ENCODE measurements at regions of chr2 and their contacts with region 1.

Region 1: GRCh38 chr2:70104231-70105111 is 17.2 kb downstream of the PCBP1 start:
- DNase-seq: peak; percentile 69
- ATAC-seq: no peak
- H3K4me3 ChIP-seq: peak overlapping the region in 2 of 3 experiments; percentile 45 to 59; a peak in 4 of 6 replicates
- H3K27ac ChIP-seq: peak overlapping the region; percentile 55
- H3K4me1 ChIP-seq: peaks cover 54% of the 10 kb centered on the region
- H3K27me3 ChIP-seq: no peaks in the 10 kb centered on the region; a peak in 1 of 5 replicates
- CTCF ChIP-seq: no peak
- EP300 ChIP-seq: peak in 1 of 2 experiments; percentile 32; a peak in 1 of 4 replicates
- POLR2A ChIP-seq: no peak
- RAD21 ChIP-seq: no peak

Region 2: DNA sequence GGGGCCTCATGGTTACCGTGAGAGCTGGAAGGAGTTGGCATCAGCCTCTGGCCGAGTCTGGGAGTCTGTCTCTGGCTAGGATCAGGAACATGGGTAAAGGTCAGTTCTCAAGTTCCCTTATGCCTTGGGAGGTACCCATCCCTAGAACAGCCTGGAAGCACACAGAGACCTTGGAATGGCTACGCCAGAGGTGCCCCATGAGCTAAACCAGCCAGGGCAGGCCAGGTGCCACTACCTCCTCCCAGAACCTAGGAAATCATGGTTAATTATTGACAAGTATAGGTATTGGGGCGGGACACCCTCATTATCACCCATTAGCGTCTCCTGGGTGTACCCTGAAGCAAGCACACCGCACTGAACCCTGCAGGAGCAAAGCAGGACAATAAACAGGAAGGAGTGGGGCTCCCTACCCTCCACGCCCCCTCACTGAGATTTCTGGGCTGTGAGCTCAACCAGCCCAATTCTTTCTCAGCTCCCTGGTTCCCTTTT is 140.1 kb before region 1 on chr2:
- CTCF ChIA-PET with region 1: no interaction called
- POLR2A ChIA-PET with region 1: no interaction called
- in situ Hi-C with region 1: no loop called
- intact Hi-C with region 1: no loop called
- DNase-seq: peak; percentile 58
- ATAC-seq: peak; percentile 57
- H3K4me3 ChIP-seq: peak overlapping the region in 2 of 3 experiments; percentile 13 to 37; a peak in 3 of 6 replicates
- H3K27ac ChIP-seq: no peak overlapping the region
- H3K4me1 ChIP-seq: peaks cover 52% of the 10 kb centered on the region
- H3K27me3 ChIP-seq: no peaks in the 10 kb centered on the region
- CTCF ChIP-seq: 0 out of 2 replicates have a peak, but pooled peaks have one; percentile 9
- EP300 ChIP-seq: no peak
- POLR2A ChIP-seq: no peak
- RAD21 ChIP-seq: no peak

Region 3: DNA sequence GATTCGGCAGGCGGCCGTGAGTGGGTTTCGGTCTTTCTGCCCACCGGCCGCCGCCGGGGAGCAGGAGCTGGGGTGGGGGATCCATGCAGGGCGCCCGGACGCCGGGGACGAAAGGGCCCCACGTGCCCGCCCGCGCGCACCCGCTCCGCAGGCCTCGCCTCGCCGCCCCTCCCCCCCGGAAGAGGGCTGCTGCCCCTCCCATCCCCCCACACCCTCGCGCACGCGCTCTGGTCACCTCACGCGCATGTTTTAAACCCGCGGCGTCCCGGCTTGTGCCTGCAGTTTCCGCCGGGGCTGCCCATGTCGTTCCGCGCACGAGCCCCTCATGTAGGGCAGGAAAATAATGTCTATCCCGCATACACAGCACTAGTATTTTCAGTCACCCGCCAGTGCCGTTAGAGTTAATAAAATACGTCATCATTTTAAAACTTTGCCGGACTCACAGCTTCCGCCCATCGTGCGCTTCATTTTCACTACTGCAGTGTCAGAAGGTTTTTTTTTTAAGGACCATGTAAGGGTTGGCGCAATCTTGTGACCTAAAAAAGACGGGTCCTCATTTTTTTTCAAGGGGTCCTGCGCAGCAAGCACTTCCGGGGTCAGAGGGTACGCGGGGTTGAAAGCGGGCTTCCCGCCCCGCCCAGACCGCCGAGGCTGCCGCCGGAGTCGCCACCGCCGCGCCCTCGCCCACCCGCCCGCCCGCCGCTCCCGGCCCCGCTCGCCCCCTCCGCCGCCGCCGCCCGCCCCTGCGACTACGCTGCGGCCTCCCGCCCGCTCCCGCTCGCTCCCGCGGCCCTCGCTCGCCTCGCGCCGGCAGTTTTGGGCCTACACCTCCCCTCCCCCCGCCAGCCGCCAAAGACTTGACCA is 17.4 kb before region 1 on chr2 and contains the start of gene PCBP1:
- CTCF ChIA-PET with region 1: no interaction called
- POLR2A ChIA-PET with region 1: interaction called, 423 read pairs
- in situ Hi-C with region 1: no loop called
- intact Hi-C with region 1: loop called (anchors 2 kb)
- DNase-seq: peak; percentile 94
- ATAC-seq: peak; percentile 49
- H3K4me3 ChIP-seq: peak within 1 kb of the TSS; percentile 93 to 95 (median 95)
- H3K27ac ChIP-seq: peak within 1 kb of the TSS; percentile 99
- H3K4me1 ChIP-seq: peaks cover 56% of the 10 kb centered on the region
- H3K27me3 ChIP-seq: no peaks in the 10 kb centered on the region; a peak in 1 of 5 replicates
- CTCF ChIP-seq: no peak
- EP300 ChIP-seq: no peak; a peak in 2 of 4 replicates
- POLR2A ChIP-seq: peak; percentile 71 to 81
- RAD21 ChIP-seq: peak; percentile 50; the same call in 1 of the 2 replicates
- total RNA-seq, gene PCBP1: 32.0 and 104 TPM in 2 replicates

Region 4: DNA sequence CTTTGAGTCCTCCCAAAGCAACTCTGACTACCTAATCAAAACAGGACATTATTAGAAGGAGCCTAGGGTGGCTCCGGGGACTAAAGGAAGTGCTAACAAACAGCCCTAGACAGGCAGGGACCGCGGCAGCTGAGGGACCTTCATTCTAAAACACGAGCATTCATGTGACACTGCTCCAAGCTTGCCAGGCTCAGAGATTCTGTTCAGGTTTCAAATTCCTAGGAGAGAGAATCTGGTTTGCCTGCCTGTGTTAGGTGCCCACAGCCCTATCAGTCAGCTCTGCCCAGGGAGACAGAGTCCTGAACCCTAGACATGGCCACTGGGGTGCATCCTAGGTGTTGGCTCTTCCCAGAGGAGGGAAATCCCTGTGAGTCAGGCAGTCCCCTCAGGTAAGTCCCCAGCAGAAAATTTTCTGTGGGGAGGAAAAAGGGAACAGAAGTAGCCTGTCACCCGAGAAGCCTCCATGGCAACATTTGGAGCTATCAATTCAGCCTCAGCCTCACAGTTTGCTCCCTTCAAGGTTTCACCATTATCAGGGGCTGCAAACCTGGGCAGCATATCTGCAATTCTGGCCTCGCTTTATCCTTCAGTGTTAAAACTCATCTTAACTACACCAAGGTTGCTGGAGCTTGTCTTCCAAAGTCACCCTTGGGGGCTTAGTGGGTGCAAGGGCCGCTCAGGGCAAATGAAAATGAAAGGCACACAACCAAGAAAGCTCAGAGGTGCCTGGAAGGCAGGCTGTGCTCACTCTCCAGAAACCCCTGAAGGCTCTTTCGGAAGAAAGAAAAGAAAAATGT is 11.4 kb after region 1 on chr2:
- CTCF ChIA-PET with region 1: no interaction called
- POLR2A ChIA-PET with region 1: interaction called, 55 read pairs
- in situ Hi-C with region 1: no loop called
- intact Hi-C with region 1: no loop called
- DNase-seq: no peak
- ATAC-seq: no peak; the same call in 2 of the 3 replicates
- H3K4me3 ChIP-seq: no peak overlapping the region
- H3K27ac ChIP-seq: no peak overlapping the region
- H3K4me1 ChIP-seq: peaks cover 54% of the 10 kb centered on the region
- H3K27me3 ChIP-seq: no peaks in the 10 kb centered on the region
- CTCF ChIP-seq: no peak
- EP300 ChIP-seq: no peak
- POLR2A ChIP-seq: no peak
- RAD21 ChIP-seq: no peak

Region 5: DNA sequence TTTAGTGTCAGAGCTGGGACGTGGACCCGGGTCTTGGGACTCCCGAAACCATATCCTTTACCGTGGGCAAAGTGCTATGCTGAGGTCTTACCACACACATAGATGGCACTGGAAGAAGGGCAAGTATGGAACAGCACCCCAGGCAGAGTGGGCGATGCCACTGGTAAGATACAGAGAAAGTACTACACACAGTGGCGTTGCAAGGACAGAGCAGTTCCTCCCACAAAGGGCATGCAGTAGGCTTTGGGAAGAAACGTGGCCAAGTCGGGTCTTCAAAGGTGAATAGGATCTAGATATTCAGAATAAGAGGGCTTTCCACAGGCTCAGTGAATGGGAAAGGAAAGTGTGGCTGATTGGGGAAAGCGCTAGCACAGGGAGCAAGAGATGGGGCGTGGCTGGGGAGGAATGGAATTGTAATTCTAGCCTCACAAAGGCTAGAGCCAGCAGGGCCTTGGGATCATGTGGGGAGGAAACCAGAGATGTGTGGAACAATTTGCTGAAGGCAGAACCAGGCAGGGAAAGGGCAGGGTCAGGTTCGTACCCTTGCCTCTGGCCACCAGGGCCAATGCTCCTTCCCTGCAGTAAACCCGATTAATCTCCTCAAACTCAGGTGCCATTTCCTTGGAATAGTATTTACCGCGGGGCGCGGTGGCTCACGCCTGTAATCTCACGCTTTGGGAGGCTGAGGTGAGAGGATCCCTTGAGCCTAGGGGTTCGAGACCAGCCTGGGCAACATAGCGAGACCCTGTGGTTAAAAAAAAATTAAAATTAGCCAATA is 18.8 kb after region 1 on chr2:
- CTCF ChIA-PET with region 1: no interaction called
- POLR2A ChIA-PET with region 1: interaction called, 55 read pairs
- in situ Hi-C with region 1: no loop called
- intact Hi-C with region 1: no loop called
- DNase-seq: no peak
- ATAC-seq: no peak
- H3K4me3 ChIP-seq: no peak overlapping the region
- H3K27ac ChIP-seq: no peak overlapping the region
- H3K4me1 ChIP-seq: peaks cover 64% of the 10 kb centered on the region
- H3K27me3 ChIP-seq: no peaks in the 10 kb centered on the region
- CTCF ChIP-seq: no peak
- EP300 ChIP-seq: no peak
- POLR2A ChIP-seq: no peak
- RAD21 ChIP-seq: no peak

Region 6: DNA sequence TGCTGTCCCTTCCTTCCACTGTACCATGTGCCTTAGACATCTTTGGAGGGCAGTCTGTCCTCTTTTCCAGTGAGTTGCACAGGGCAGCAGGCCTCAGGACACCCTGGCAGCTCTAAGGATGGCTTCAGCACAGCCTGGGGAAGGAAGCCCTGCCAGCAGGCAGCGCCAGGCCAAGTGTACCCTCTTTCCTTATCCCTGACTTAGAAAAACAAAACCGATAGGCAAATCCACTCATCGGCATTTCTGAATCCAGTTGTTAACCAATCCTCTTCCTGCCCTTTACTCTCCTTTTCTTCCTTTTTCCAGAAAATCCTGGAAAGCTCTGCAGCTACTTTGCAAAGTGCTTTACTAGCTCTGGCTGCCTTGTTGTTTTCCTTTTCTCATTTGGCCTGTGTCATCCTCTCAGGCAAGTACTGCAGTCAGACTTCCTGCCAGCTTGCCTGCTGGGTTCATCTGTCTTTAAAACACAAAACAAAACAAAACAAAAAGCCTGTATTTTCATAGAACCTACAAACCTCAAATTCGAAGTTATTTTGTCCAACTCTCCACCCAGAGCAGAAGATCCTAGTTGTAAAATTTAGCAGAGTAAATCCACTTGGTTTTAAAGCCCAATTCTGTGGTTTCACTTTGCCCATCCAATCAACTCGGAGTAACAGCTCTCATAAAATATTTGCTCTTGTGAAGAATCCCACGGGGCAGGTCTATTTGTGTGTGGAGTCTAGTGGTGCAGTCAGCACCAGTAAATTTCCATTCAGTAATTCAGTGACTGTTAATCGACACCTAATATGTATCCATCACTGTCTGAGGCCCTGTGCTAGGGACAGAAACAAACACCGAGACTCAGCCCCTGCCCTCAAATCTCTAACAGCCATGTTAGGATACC is 28.0 kb after region 1 on chr2:
- CTCF ChIA-PET with region 1: no interaction called
- POLR2A ChIA-PET with region 1: interaction called, 169 read pairs
- in situ Hi-C with region 1: no loop called
- intact Hi-C with region 1: no loop called
- DNase-seq: peak; percentile 86
- ATAC-seq: peak; percentile 83
- H3K4me3 ChIP-seq: peak overlapping the region; percentile 53 to 74 (median 73)
- H3K27ac ChIP-seq: peak overlapping the region; percentile 86
- H3K4me1 ChIP-seq: peaks cover 68% of the 10 kb centered on the region
- H3K27me3 ChIP-seq: no peaks in the 10 kb centered on the region
- CTCF ChIP-seq: no peak
- EP300 ChIP-seq: no peak; a peak in 1 of 4 replicates
- POLR2A ChIP-seq: peak; percentile 31 to 83; a peak in 3 of 4 replicates
- RAD21 ChIP-seq: 0 out of 2 replicates have a peak, but pooled peaks have one; percentile 21

Measured in HepG2 (cell line).